H1 (cell line): ENCODE measurements at regions of chr4 and their contacts with region 1.

Region 1: GRCh38 chr4:10403633-10404445 is 53.4 kb downstream of the ZNF518B start:
- DNase-seq: peak in 1 of 2 experiments; percentile 1
- H3K4me3 ChIP-seq: no peak overlapping the region
- H3K27ac ChIP-seq: no peak overlapping the region
- H3K4me1 ChIP-seq: no peaks in the 10 kb centered on the region; a peak in 1 of 7 replicates
- H3K27me3 ChIP-seq: no peaks in the 10 kb centered on the region
- CTCF ChIP-seq: peak in 2 of 3 experiments; percentile 54 to 55; a peak in 2 of 4 replicates
- EP300 ChIP-seq: no peak
- POLR2A ChIP-seq: no peak
- RAD21 ChIP-seq: peak; percentile 81 to 86

Region 2: DNA sequence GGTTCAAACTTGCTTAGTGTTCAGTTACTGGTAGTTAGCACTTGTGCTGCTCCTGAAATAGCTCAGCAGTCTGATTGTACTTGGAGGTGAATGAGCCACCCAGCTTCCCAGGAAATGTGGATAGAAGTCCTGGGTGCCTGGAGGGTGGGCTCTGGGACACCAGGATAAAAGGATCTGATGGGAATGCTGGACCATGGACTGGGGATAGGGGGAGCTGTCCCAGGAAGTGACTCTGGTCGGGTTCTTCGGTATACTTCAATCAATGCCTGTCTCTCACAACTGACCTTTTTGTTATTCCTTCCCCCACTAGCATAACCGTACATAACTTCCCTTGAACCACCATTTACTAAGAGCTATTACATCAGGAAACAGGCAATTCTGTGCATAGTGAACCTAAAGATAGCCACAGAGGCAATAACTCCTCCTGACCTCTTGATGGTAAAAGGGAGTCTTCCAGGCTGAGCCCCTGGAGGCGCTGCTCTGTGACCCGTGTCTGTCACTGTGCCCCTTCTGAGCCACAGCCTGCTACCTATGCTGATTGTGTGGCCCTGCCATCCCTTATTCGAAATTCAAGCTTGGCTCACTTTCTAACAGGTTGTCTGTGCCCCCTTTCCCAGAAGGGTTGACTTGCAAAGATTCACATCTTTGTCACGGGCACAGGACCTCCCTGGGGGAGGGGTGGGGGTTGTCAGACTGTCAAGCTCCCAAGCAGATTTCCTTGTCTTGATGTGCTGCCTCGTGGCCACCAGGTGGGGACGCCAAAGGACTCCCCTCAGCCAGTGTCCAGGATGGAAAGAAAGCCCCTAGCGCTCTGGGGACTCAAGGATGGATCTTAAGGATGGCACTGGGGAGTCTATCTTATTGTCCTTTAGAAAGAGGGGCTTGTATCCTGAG is 262.7 kb before region 1 on chr4:
- CTCF ChIA-PET with region 1: interaction called, 16 read pairs
- POLR2A ChIA-PET with region 1: no interaction called
- DNase-seq: peak in 1 of 2 experiments; percentile 68
- H3K4me3 ChIP-seq: peak overlapping the region in 1 of 4 experiments; percentile 23; a peak in 1 of 8 replicates
- H3K27ac ChIP-seq: no peak overlapping the region
- H3K4me1 ChIP-seq: no peaks in the 10 kb centered on the region
- H3K27me3 ChIP-seq: peaks cover 0 to 8% (median 0%) of the 10 kb centered on the region in 4 experiments; a peak in 2 of 7 replicates
- CTCF ChIP-seq: peak; percentile 72 to 81 (median 79)
- EP300 ChIP-seq: no peak
- POLR2A ChIP-seq: no peak
- RAD21 ChIP-seq: peak; percentile 74

Region 3: DNA sequence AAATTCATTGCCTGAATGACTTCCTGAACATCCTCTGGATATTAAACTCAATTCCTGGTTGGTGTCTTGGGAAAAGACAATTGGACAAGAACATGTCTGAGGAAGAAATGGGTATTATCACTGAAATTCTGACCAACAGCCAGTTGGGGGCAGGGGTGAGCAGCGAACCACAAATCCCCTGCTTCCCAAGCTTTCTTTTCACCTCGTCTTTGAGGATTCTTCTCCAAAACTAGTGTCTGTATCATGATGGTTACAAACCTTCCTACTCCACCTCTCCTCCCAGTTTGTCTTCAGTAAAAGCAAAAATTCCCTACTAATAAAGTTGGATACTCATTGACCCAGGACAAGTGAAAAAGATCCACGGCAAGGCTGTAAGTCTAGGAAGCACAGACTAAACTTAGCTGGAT is 239.0 kb before region 1 on chr4:
- CTCF ChIA-PET with region 1: interaction called, 264 read pairs
- POLR2A ChIA-PET with region 1: no interaction called
- DNase-seq: peak; percentile 15 to 77
- H3K4me3 ChIP-seq: no peak overlapping the region
- H3K27ac ChIP-seq: no peak overlapping the region
- H3K4me1 ChIP-seq: no peaks in the 10 kb centered on the region
- H3K27me3 ChIP-seq: no peaks in the 10 kb centered on the region; a peak in 2 of 7 replicates
- CTCF ChIP-seq: peak; percentile 62 to 82 (median 66)
- EP300 ChIP-seq: no peak
- POLR2A ChIP-seq: no peak
- RAD21 ChIP-seq: peak; percentile 86 to 89

Region 4: GRCh38 chr4:10186228-10187214 is 217.3 kb before region 1 on chr4:
- CTCF ChIA-PET with region 1: interaction called, 25 read pairs
- POLR2A ChIA-PET with region 1: no interaction called
- DNase-seq: no peak
- H3K4me3 ChIP-seq: no peak overlapping the region
- H3K27ac ChIP-seq: no peak overlapping the region
- H3K4me1 ChIP-seq: no peaks in the 10 kb centered on the region
- H3K27me3 ChIP-seq: no peaks in the 10 kb centered on the region
- CTCF ChIP-seq: peak in 2 of 3 experiments; percentile 15 to 31; a peak in 2 of 4 replicates
- EP300 ChIP-seq: no peak
- POLR2A ChIP-seq: no peak
- RAD21 ChIP-seq: peak; percentile 24 to 42; a peak in 2 of 4 replicates

Region 5: DNA sequence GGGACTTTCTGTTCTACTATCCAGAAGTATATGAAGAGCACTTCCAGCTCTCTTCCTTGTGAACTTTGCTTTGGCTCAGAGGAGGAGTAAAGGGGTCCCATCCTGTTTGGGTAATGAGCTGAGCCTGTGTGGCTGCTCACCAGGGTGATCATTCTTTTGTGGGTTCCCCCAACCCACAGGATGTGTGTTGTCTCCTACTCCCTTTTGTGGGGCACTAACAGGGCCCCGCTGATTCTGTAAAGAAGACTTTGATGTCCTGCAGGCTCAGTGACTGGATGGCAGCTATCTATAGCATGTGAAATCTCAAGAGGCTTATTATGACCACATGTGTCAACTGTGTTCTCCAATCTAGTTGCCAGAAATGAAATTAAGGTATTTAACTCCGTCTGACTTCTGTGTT is 12.6 kb after region 1 on chr4:
- CTCF ChIA-PET with region 1: interaction called, 13 read pairs
- POLR2A ChIA-PET with region 1: no interaction called
- DNase-seq: no peak
- H3K4me3 ChIP-seq: no peak overlapping the region
- H3K27ac ChIP-seq: no peak overlapping the region
- H3K4me1 ChIP-seq: no peaks in the 10 kb centered on the region
- H3K27me3 ChIP-seq: no peaks in the 10 kb centered on the region
- CTCF ChIP-seq: no peak
- EP300 ChIP-seq: no peak
- POLR2A ChIP-seq: no peak
- RAD21 ChIP-seq: no peak

Region 6: GRCh38 chr4:10496200-10496599 is 92.4 kb after region 1 on chr4:
- CTCF ChIA-PET with region 1: no interaction called
- POLR2A ChIA-PET with region 1: no interaction called
- DNase-seq: peak in 1 of 2 experiments; percentile 41
- H3K4me3 ChIP-seq: peak overlapping the region in 1 of 4 experiments; percentile 36; a peak in 1 of 8 replicates
- H3K27ac ChIP-seq: no peak overlapping the region
- H3K4me1 ChIP-seq: peaks cover 6 to 28% (median 17%) of the 10 kb centered on the region in 4 experiments; a peak in 6 of 7 replicates
- H3K27me3 ChIP-seq: peaks cover 3 to 21% (median 11%) of the 10 kb centered on the region in 4 experiments; a peak in 6 of 7 replicates
- CTCF ChIP-seq: no peak
- EP300 ChIP-seq: peak in 1 of 2 experiments; percentile 74; a peak in 1 of 3 replicates
- POLR2A ChIP-seq: no peak
- RAD21 ChIP-seq: no peak; a peak in 1 of 4 replicates

Region 7: DNA sequence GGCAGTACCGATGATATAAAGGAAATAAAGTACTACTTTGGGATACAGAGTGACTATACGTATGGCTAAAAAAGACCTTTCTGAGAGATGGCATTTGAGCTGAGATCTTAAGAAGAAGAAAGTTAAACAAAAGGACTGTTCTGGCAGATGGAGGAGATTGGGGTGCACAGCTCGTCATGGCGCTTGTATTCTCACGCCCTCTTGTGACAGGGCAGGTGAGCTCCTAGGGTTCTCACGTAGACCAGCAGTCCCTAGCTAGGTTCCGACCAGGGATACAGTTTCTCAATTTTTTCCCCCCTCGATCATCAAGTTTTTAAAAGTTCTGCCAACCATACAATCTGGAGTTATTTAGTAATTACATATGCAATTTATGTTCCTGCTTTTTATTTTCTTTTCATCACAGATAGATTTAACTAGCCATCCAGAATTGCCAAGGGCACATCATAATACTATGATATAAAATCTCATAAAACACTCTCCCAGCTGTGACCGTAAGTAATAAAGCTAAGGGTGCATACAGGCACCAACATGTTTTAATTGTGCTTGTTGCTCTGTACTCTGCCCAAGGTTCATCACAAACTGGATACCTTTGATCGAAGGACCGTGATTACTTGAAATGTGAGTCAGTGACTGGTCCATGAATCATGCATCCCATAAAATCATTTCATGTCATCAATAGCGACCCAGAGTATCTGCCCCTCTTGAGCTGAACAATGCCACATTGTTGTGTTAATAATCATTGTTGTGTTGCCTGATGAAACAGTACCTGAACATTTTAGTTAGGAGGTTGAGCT is 122.8 kb after region 1 on chr4:
- CTCF ChIA-PET with region 1: interaction called, 10 read pairs
- POLR2A ChIA-PET with region 1: no interaction called
- DNase-seq: no peak
- H3K4me3 ChIP-seq: no peak overlapping the region
- H3K27ac ChIP-seq: no peak overlapping the region
- H3K4me1 ChIP-seq: no peaks in the 10 kb centered on the region
- H3K27me3 ChIP-seq: no peaks in the 10 kb centered on the region; a peak in 1 of 7 replicates
- CTCF ChIP-seq: peak; percentile 58 to 66 (median 61)
- EP300 ChIP-seq: no peak
- POLR2A ChIP-seq: no peak
- RAD21 ChIP-seq: peak; percentile 74 to 83